ENCODE measurements at regions of chr7 and their contacts with region 1.

Region 1: DNA sequence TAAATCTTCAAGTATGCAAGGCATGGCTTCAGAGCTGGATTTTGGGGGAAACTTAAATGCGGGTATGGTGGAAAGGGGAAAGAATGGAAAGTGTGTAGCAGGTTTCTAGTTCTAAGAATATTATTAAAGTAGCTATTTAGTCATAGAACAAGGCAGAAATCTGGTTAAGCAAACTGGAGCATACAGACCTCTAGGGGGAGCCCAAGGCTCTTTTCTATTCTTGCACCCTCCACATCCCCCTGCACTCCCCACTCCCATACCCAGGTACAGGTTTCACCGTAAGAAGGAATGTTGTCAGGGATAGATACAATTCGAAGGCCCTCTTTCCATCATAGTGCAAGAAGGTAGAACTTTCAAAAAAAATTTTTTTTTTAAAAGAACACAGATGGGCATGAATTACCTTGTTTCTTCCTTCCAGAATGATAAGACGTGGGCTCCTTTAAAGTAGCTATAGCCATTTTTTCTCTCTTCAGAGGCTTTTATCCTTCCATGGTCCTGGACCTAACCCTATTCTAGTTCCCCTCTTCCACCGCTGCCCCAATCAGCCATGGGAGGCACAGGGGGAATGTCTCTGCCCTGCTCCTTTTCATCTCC is 41.5 kb upstream of the SMIM30 start:
- DNase-seq: no peak
- H3K4me3 ChIP-seq: no peak overlapping the region
- CTCF ChIP-seq: peak; percentile 63

Region 2: DNA sequence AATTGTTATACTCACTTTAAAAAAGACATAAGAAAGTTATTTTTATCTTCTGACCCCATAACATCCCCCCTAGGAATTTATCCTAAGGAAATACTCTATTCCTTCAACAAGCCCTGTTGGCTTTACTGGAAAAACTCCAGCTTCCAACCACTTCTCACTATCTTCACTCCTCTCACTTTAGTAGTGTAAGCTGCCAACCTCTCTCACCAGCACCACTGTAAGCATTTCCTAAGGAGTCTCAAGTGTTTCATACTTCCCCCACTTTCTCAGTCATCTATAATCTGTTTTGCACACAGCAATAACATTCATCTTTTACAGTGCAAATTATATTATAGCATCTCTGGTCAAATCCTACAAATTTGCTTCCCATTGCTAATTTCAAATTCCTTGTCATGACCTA is 119.0 kb before region 1 on chr7:
- CTCF ChIA-PET with region 1: no interaction called
- POLR2A ChIA-PET with region 1: no interaction called
- DNase-seq: no peak
- H3K4me3 ChIP-seq: no peak overlapping the region
- CTCF ChIP-seq: no peak

Region 3: DNA sequence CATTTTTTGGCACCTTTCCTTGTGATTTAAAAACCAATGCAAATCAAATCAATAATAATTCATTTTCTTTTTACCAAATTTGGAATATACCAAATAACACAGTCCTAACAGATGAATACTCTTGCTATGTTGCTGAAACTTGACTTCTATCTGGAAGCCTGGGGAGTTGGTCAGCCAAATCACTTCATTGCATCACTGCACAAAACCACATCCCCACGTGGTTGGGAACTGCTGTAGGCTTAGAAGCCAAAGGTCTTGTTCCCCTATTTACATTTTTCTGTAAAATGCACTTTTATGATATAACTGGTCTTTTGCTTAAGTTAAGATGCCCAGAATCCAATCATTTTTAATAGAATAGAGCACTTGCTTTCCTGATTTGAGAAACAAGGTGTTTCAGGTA is 88.4 kb before region 1 on chr7:
- CTCF ChIA-PET with region 1: no interaction called
- POLR2A ChIA-PET with region 1: no interaction called
- DNase-seq: no peak
- H3K4me3 ChIP-seq: no peak overlapping the region
- CTCF ChIP-seq: no peak

Region 4: DNA sequence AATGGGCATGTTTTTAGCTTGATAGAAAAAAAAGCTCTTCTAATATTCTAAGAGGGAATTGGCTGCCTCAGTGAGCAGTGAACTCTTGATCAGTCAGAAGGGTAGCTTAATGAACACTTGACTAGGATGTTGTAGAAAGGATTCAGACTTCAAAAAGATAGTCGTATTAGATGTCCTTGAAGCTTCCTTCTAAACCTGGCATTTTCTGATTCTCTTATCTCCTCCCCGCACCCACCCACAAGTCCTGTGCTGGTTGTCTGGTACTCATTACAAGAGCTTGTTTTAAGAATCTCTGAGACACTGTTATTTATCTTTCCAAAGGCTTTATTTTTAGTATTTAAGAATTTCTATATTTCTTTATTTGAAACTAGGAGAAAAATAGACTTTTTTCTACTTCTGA is 34.1 kb before region 1 on chr7:
- CTCF ChIA-PET with region 1: interaction called, 10 read pairs
- POLR2A ChIA-PET with region 1: no interaction called
- DNase-seq: no peak
- H3K4me3 ChIP-seq: no peak overlapping the region
- CTCF ChIP-seq: no peak

Region 5: GRCh38 chr7:113142385-113143119 is 17.3 kb before region 1 on chr7:
- CTCF ChIA-PET with region 1: interaction called, 36 read pairs
- POLR2A ChIA-PET with region 1: no interaction called
- DNase-seq: no peak
- H3K4me3 ChIP-seq: no peak overlapping the region
- CTCF ChIP-seq: no peak

Region 6: DNA sequence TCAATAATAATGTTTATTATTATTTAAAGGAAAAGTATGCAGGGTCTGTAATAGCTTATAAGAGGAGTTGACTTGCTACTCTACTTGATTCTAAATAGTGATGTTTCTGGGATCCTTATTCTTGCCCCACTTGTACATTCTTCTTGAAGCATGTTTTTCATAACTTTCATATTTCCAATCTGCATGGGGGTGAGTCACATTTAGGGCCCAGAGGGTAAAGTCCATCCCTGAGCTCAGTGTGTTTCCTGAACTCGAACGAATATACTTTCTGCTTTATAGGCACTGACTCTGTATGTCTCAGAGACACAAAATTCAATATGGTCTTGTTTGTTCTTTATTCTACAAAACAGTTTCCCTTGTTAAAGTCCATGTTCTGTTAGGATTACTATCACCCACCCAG is 19.5 kb after region 1 on chr7:
- CTCF ChIA-PET with region 1: interaction called, 18 read pairs
- POLR2A ChIA-PET with region 1: no interaction called
- DNase-seq: no peak
- H3K4me3 ChIP-seq: no peak overlapping the region
- CTCF ChIP-seq: no peak

Region 7: GRCh38 chr7:113289140-113289740 is 129.4 kb after region 1 on chr7:
- CTCF ChIA-PET with region 1: interaction called, 43 read pairs
- POLR2A ChIA-PET with region 1: no interaction called
- DNase-seq: no peak
- H3K4me3 ChIP-seq: no peak overlapping the region
- CTCF ChIP-seq: peak; percentile 58